Activated T-helper 1 cell treated with anti-CD3 and anti-CD28 coated beads, Interleukin-12 subunit alpha, Interleukin-12 subunit beta, Interleukin-2, Interleukin-4 antibody, amounts not matched to agents 30 ng/mL and 10 ng/mL and 1 ng/mL, durations not matched to agents 14 hours and 24 hours and 36 hours (primary cell): ENCODE measurements at regions of chr3 and their contacts with region 1.

Region 1: GRCh38 chr3:30658328-30659052 is 52.1 kb downstream of the TGFBR2 start:
- DNase-seq: no peak
- H3K4me3 Mint-ChIP-seq: peak overlapping the region; percentile 85
- H3K27ac Mint-ChIP-seq: peak overlapping the region; percentile 96
- H3K4me1 Mint-ChIP-seq: peaks cover 97% of the 10 kb centered on the region
- H3K27me3 Mint-ChIP-seq: no peaks in the 10 kb centered on the region

Region 2: GRCh38 chr3:30476373-30477082 is 182.0 kb before region 1 on chr3:
- intact Hi-C with region 1: loop called (anchors 5 kb)
- DNase-seq: no peak
- H3K4me3 Mint-ChIP-seq: no peak overlapping the region
- H3K27ac Mint-ChIP-seq: no peak overlapping the region
- H3K4me1 Mint-ChIP-seq: peaks cover 51% of the 10 kb centered on the region
- H3K27me3 Mint-ChIP-seq: no peaks in the 10 kb centered on the region

Region 3: GRCh38 chr3:30611613-30612436 is 46.7 kb before region 1 on chr3:
- intact Hi-C with region 1: loop called (anchors 1 kb)
- DNase-seq: no peak
- H3K4me3 Mint-ChIP-seq: peak overlapping the region; percentile 97
- H3K27ac Mint-ChIP-seq: peak overlapping the region; percentile 93
- H3K4me1 Mint-ChIP-seq: peaks cover 84% of the 10 kb centered on the region
- H3K27me3 Mint-ChIP-seq: no peaks in the 10 kb centered on the region

Region 4: DNA sequence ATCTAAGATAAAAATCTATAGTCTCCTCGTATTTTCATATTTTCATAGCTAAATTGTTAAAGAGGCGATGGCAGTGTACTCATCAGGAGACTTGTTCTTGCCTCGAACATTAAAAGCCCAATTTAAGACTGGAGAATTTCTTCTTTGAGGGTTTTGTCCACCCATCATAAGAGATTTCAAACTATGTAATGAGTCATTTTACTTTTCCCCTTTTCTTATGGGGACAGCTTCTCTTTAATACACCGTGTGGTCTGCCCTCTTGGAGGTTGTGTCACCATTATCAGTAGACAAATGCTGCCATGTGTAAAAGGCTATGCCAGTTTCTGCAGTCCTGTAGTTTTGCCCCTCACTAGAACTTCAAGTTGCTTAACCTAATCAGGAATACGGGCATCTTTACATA is 35.1 kb before region 1 on chr3:
- intact Hi-C with region 1: loop called (anchors 1 kb)
- DNase-seq: no peak
- H3K4me3 Mint-ChIP-seq: peak overlapping the region; percentile 66
- H3K27ac Mint-ChIP-seq: peak overlapping the region; percentile 90
- H3K4me1 Mint-ChIP-seq: peaks cover 83% of the 10 kb centered on the region
- H3K27me3 Mint-ChIP-seq: no peaks in the 10 kb centered on the region

Region 5: DNA sequence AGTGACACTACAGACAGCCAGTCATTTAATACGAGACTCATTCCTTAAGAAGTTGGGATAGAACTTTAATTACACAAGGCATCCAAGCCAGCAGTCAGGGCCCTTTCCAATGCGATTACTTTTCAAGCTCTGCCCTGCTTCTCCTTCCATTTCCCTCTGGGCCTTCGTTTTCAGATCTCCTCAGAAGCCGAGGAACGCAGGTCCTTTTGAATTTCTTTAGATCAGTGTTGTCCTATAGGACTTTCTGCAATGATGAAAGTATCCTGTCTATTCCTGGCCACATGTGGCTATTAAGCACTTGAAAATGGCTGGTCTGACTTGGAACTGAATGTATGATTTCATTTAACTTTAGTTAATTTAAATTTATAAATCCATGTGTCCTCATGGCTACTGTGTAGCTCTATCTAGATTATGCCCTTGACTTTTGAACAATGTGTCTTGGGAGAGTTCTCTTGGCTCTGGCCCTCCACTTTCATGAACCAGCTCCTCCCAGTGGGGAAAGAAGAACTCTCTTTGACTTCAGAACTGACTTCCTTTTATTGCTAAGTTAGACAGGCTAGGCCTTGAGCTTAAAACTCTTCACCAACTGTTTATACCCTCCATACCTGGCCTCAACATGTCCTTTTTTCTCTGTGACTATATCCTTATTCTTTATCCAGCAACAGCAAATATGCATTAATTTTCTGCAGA is 29.4 kb before region 1 on chr3:
- intact Hi-C with region 1: loop called (anchors 1 kb)
- DNase-seq: no peak
- H3K4me3 Mint-ChIP-seq: peak overlapping the region; percentile 66
- H3K27ac Mint-ChIP-seq: peak overlapping the region; percentile 98
- H3K4me1 Mint-ChIP-seq: peaks cover 83% of the 10 kb centered on the region
- H3K27me3 Mint-ChIP-seq: no peaks in the 10 kb centered on the region

Region 6: GRCh38 chr3:30934208-30934550 is 275.7 kb after region 1 on chr3:
- intact Hi-C with region 1: no loop called
- DNase-seq: no peak
- H3K4me3 Mint-ChIP-seq: no peak overlapping the region
- H3K27ac Mint-ChIP-seq: no peak overlapping the region
- H3K4me1 Mint-ChIP-seq: peaks cover 8% of the 10 kb centered on the region
- H3K27me3 Mint-ChIP-seq: peaks cover 2% of the 10 kb centered on the region